ENCODE measurements at regions of chr1 and their contacts with region 1.

Region 1: DNA sequence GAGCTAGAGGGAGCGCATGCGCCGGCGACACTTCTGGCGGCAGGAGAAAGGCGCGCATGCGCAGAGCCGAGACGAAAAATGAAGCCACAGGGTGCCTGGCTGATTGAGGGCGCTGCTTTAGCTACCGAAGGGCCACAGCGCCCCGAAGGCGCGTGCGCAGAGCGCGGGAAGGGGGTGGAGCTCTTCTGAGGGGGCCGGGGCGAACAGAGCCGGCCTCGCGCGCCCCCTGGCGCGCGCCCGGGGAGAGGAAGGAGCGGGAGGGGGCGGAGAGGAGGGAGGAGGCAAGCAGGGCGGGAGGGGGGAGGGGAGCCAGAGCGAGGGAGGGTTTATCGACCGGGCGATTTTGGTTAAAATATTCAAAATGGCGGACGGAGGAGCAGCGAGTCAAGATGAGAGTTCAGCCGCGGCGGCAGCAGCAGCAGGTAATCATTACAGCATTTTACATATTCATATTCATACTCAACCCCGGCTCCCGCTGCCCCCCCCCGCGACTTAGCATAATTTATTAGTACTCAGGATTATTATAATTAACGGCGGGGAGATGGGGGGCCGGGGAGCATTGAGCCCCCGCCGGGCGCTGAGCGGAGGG is at the start of gene POU2F1:
- DNase-seq: peak; percentile 98 to 100 (median 99)
- ATAC-seq: peak; percentile 80
- H3K4me3 ChIP-seq: peak within 1 kb of the TSS; percentile 94
- H3K4me3 Mint-ChIP-seq: peak within 1 kb of the TSS; percentile 99
- H3K27ac ChIP-seq: peak within 1 kb of the TSS; percentile 87 to 98
- H3K27ac Mint-ChIP-seq: peak within 1 kb of the TSS; percentile 94
- H3K4me1 ChIP-seq: peaks cover 16% of the 10 kb centered on the region
- H3K4me1 Mint-ChIP-seq: peaks cover 40% of the 10 kb centered on the region
- H3K27me3 ChIP-seq: no peaks in the 10 kb centered on the region
- H3K27me3 Mint-ChIP-seq: no peaks in the 10 kb centered on the region
- CTCF ChIP-seq: peak; percentile 53
- total RNA-seq, gene POU2F1: 27.0 to 28.6 TPM

Region 2: DNA sequence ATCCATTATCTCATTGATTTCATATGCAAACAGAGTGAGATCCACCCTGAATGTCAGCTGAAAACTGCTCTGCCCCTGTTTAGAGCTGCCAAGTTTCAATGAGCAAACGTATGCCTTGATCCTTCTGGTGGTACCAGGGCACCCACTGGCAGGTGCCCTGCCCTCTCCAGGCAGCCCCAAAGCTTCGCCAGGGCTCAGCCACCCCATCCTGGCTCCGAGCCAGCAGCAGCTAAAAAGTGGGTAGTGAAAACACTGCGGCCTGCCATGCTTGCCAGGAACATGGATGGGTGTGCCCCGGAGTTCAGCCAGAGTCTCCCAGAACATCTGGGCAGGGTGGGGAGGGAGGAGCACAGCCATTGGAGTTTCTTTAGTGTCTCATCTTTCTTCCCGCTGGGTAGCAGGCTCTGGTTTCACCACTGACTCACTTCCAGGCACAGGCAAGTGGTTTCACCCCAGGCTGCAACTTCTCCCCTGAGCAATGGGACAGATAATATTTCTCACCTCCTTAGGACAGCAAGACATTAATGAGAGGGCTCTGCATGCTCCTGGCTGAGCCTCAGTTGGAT is 1856.0 kb before region 1 on chr1:
- CTCF ChIA-PET with region 1: no interaction called
- POLR2A ChIA-PET with region 1: no interaction called
- intact Hi-C with region 1: no loop called
- DNase-seq: no peak
- ATAC-seq: no peak
- H3K4me3 ChIP-seq: no peak overlapping the region
- H3K4me3 Mint-ChIP-seq: no peak overlapping the region
- H3K27ac ChIP-seq: no peak overlapping the region
- H3K27ac Mint-ChIP-seq: no peak overlapping the region
- H3K4me1 ChIP-seq: peaks cover 6% of the 10 kb centered on the region
- H3K4me1 Mint-ChIP-seq: no peaks in the 10 kb centered on the region
- H3K27me3 ChIP-seq: peaks cover 19 to 43% of the 10 kb centered on the region in 2 experiments
- H3K27me3 Mint-ChIP-seq: peaks cover 76% of the 10 kb centered on the region
- CTCF ChIP-seq: no peak

Region 3: DNA sequence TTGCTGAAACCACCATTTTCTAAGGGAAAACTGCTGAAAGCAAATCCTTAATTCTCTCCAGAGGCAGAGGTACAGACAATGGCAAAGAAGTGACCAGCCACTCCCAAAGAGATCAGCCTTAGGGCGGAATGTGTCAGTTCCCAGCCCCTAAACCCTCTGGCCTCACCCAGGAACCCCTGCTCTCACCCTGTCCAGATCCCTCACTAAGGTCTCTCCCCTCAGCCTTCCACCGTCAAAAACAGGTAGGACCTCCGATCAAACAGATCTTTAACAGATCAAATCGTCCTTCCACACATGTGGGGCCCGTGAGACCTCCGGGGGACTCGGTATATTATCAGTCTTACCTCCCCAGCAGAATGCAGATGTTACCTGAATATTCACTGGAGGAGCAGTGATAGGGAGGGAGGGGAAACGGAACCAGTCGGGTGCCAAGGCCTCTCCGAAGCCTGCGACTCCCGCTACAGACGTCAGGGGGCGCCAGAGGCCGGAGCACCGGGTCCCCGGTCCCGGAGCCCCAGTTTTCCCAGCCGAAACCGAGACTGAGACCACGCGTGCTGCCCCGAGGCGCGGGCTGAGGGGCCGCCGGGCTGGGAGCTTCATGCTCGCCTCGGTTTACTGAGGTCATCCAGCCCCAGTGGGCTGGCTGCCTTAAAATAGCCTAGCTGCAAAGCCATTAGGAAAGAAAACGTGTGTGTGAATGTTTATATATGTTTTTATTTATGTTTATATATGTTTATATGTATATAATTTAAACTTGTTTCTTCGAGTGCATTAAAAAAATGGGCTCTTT is 154.1 kb before region 1 on chr1:
- CTCF ChIA-PET with region 1: interaction called, 6 read pairs
- POLR2A ChIA-PET with region 1: interaction called, 3 read pairs
- intact Hi-C with region 1: loop called (anchors 2 kb)
- DNase-seq: peak; percentile 53 to 89 (median 79)
- ATAC-seq: peak; percentile 98
- H3K4me3 ChIP-seq: peak overlapping the region; percentile 15
- H3K4me3 Mint-ChIP-seq: no peak overlapping the region
- H3K27ac ChIP-seq: no peak overlapping the region
- H3K27ac Mint-ChIP-seq: no peak overlapping the region
- H3K4me1 ChIP-seq: peaks cover 6% of the 10 kb centered on the region
- H3K4me1 Mint-ChIP-seq: no peaks in the 10 kb centered on the region
- H3K27me3 ChIP-seq: no peaks in the 10 kb centered on the region
- H3K27me3 Mint-ChIP-seq: no peaks in the 10 kb centered on the region
- CTCF ChIP-seq: peak; percentile 96

Region 4: GRCh38 chr1:167270349-167271092 is 49.9 kb after region 1 on chr1:
- CTCF ChIA-PET with region 1: interaction called, 18 read pairs
- POLR2A ChIA-PET with region 1: interaction called, 70 read pairs
- intact Hi-C with region 1: no loop called
- DNase-seq: no peak
- ATAC-seq: no peak
- H3K4me3 ChIP-seq: no peak overlapping the region
- H3K4me3 Mint-ChIP-seq: no peak overlapping the region
- H3K27ac ChIP-seq: no peak overlapping the region
- H3K27ac Mint-ChIP-seq: no peak overlapping the region
- H3K4me1 ChIP-seq: peaks cover 5% of the 10 kb centered on the region
- H3K4me1 Mint-ChIP-seq: peaks cover 53% of the 10 kb centered on the region
- H3K27me3 ChIP-seq: no peaks in the 10 kb centered on the region
- H3K27me3 Mint-ChIP-seq: no peaks in the 10 kb centered on the region
- CTCF ChIP-seq: no peak

Region 5: GRCh38 chr1:167454894-167455785 is 234.5 kb after region 1 on chr1:
- CTCF ChIA-PET with region 1: interaction called, 3 read pairs
- POLR2A ChIA-PET with region 1: interaction called, 14 read pairs
- intact Hi-C with region 1: no loop called
- DNase-seq: peak; percentile 70 to 93 (median 80)
- ATAC-seq: peak; percentile 69
- H3K4me3 ChIP-seq: peak overlapping the region; percentile 76
- H3K4me3 Mint-ChIP-seq: peak overlapping the region; percentile 94
- H3K27ac ChIP-seq: peak overlapping the region; percentile 93 to 98
- H3K27ac Mint-ChIP-seq: peak overlapping the region; percentile 100
- H3K4me1 ChIP-seq: peaks cover 88% of the 10 kb centered on the region
- H3K4me1 Mint-ChIP-seq: peaks cover 82% of the 10 kb centered on the region
- H3K27me3 ChIP-seq: no peaks in the 10 kb centered on the region
- H3K27me3 Mint-ChIP-seq: no peaks in the 10 kb centered on the region
- CTCF ChIP-seq: no peak

Region 6: GRCh38 chr1:167715157-167715999 is 494.7 kb after region 1 on chr1:
- CTCF ChIA-PET with region 1: interaction called, 4 read pairs
- POLR2A ChIA-PET with region 1: interaction called, 3 read pairs
- intact Hi-C with region 1: loop called in 1 of 2 experiments (anchors 5 kb)
- DNase-seq: peak; percentile 75 to 94 (median 84)
- ATAC-seq: peak; percentile 59
- H3K4me3 ChIP-seq: peak overlapping the region; percentile 79
- H3K4me3 Mint-ChIP-seq: peak overlapping the region; percentile 92
- H3K27ac ChIP-seq: peak overlapping the region in 1 of 2 donors; percentile 27
- H3K27ac Mint-ChIP-seq: peak overlapping the region; percentile 87
- H3K4me1 ChIP-seq: peaks cover 39% of the 10 kb centered on the region
- H3K4me1 Mint-ChIP-seq: peaks cover 47% of the 10 kb centered on the region
- H3K27me3 ChIP-seq: no peaks in the 10 kb centered on the region
- H3K27me3 Mint-ChIP-seq: peaks cover 18% of the 10 kb centered on the region
- CTCF ChIP-seq: peak; percentile 92

Region 7: DNA sequence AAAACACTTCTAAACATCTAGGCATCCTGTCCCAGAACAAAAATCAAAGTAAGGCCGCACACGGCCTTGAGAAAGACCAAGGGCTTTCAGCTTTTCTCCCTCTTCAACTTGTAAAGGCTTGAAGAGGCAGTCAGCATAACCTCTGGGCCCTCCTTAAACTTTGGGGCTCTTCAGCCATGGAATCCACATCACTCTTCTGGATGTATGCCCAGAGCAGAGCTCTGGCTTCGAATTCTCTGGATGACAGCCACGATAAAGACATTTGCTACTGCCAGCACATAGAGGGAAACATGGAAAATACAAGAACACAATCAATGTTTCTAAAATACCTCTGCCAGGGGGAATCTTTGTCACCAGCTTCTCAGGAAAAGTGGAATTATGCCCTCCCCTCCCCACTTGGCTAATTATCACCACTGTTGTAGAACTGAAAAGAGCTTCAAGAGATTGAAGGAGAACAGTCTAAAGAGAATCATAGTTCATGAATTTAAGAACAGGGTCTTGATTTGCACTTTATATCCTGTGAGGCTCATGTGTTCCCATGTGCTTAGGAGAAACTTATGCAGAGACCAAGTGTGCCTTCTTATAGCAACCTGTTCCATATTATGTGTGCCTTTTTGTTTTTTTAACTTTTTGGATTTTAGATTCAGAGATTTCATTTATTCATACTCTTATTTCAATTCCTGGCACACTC is 1547.4 kb after region 1 on chr1:
- CTCF ChIA-PET with region 1: no interaction called
- POLR2A ChIA-PET with region 1: no interaction called
- intact Hi-C with region 1: no loop called
- DNase-seq: no peak
- ATAC-seq: no peak
- H3K4me3 ChIP-seq: no peak overlapping the region
- H3K4me3 Mint-ChIP-seq: no peak overlapping the region
- H3K27ac ChIP-seq: no peak overlapping the region
- H3K27ac Mint-ChIP-seq: no peak overlapping the region
- H3K4me1 ChIP-seq: no peaks in the 10 kb centered on the region
- H3K4me1 Mint-ChIP-seq: no peaks in the 10 kb centered on the region
- H3K27me3 ChIP-seq: no peaks in the 10 kb centered on the region
- H3K27me3 Mint-ChIP-seq: no peaks in the 10 kb centered on the region
- CTCF ChIP-seq: no peak

Measured in CD4-positive, alpha-beta T cell (primary cell).